ENCODE measurements at regions of chr7 and their contacts with region 1.

Region 1: GRCh38 chr7:128425850-128426249 is 16.1 kb upstream of the IMPDH1 start:
- DNase-seq: peak in 1 of 2 experiments; percentile 97
- H3K4me3 ChIP-seq: no peak overlapping the region
- H3K27ac ChIP-seq: no peak overlapping the region
- H3K4me1 ChIP-seq: peaks cover 0 to 3% (median 0%) of the 10 kb centered on the region in 4 experiments; a peak in 1 of 7 replicates
- H3K27me3 ChIP-seq: no peaks in the 10 kb centered on the region
- CTCF ChIP-seq: peak; percentile 92 to 95 (median 93)
- EP300 ChIP-seq: no peak
- POLR2A ChIP-seq: no peak
- RAD21 ChIP-seq: peak; percentile 86 to 88

Region 2: DNA sequence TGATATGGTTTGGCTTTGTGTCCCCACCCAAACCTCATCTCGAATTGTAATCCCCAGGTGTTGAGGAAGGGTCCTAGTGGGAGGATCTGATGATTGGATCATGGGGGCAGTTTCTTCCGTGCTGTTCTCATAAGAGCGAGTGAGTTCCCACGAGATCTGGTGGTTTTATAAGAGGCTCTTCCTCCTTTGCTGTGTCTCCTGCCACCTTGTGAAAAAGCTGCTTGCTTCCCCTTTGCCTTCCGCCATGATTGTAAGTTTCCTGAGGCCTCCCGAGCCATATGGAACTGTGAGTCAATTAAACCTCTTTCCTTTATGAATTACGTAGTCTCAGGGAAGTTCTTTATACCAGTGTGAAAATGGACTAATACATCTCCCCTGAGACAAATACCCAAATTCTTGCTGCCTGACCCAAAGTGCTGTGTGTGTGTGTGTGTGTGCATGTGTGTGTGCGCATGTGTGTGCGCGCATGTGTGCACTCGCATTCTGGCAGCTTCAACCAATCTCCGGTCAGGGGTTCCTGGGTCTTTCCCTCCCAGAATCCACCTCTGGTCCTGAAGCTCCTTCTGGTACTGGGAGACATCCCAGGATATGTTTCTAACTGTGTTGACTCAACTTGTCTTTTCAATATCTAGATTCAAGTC is 296.5 kb before region 1 on chr7:
- CTCF ChIA-PET with region 1: no interaction called
- POLR2A ChIA-PET with region 1: no interaction called
- DNase-seq: no peak
- H3K4me3 ChIP-seq: no peak overlapping the region
- H3K27ac ChIP-seq: no peak overlapping the region
- H3K4me1 ChIP-seq: no peaks in the 10 kb centered on the region
- H3K27me3 ChIP-seq: peaks cover 1 to 8% (median 5%) of the 10 kb centered on the region in 4 experiments
- CTCF ChIP-seq: no peak
- EP300 ChIP-seq: no peak
- POLR2A ChIP-seq: no peak
- RAD21 ChIP-seq: no peak

Region 3: GRCh38 chr7:128274246-128274883 is 151.5 kb before region 1 on chr7:
- CTCF ChIA-PET with region 1: no interaction called
- POLR2A ChIA-PET with region 1: no interaction called
- DNase-seq: no peak
- H3K4me3 ChIP-seq: no peak overlapping the region
- H3K27ac ChIP-seq: no peak overlapping the region
- H3K4me1 ChIP-seq: peaks cover 3 to 15% (median 8%) of the 10 kb centered on the region in 4 experiments; a peak in 6 of 7 replicates
- H3K27me3 ChIP-seq: peaks cover 0 to 4% (median 1%) of the 10 kb centered on the region in 4 experiments; a peak in 2 of 7 replicates
- CTCF ChIP-seq: no peak
- EP300 ChIP-seq: no peak
- POLR2A ChIP-seq: no peak
- RAD21 ChIP-seq: no peak

Region 4: DNA sequence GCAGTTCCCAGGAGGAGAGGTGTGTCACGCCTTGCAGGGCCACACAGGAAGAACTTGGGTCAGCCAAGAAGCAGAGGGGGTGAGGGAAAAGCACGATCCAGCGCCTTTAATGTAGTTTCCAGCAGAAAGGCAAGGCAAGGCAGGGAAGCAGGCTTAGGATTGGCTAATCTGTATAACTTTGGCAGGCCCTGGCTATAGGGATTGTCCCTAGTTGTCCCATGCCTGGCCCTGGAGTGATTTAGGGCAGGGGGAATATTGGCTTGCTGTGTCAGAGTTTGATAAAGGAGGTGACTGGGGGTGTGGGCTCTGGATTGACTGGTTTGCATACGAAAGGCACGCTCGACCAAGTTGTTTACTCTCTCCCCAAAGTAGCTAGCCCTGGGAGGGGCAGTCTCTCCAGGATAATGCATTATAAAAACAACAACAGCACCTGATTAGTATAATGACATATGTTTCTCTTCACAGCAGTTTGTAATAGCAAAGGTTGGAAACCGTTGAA is 126.7 kb before region 1 on chr7:
- CTCF ChIA-PET with region 1: no interaction called
- POLR2A ChIA-PET with region 1: no interaction called
- DNase-seq: peak; percentile 13 to 58
- H3K4me3 ChIP-seq: peak overlapping the region in 3 of 4 experiments; percentile 8 to 43 (median 23); a peak in 4 of 8 replicates
- H3K27ac ChIP-seq: peak overlapping the region; percentile 87
- H3K4me1 ChIP-seq: peaks cover 9 to 22% (median 16%) of the 10 kb centered on the region in 4 experiments
- H3K27me3 ChIP-seq: no peaks in the 10 kb centered on the region
- CTCF ChIP-seq: no peak
- EP300 ChIP-seq: no peak; a peak in 1 of 3 replicates
- POLR2A ChIP-seq: no peak
- RAD21 ChIP-seq: no peak

Region 5: GRCh38 chr7:128352153-128352537 is 73.7 kb before region 1 on chr7:
- CTCF ChIA-PET with region 1: interaction called, 71 read pairs
- POLR2A ChIA-PET with region 1: no interaction called
- DNase-seq: peak; percentile 56 to 90
- H3K4me3 ChIP-seq: 0 out of 8 replicates have a peak overlapping the region, but pooled peaks of 1 of the 4 experiments have one; percentile 18
- H3K27ac ChIP-seq: no peak overlapping the region
- H3K4me1 ChIP-seq: peaks cover 0 to 7% (median 5%) of the 10 kb centered on the region in 4 experiments; a peak in 6 of 7 replicates
- H3K27me3 ChIP-seq: peaks cover 34 to 71% (median 57%) of the 10 kb centered on the region in 4 experiments
- CTCF ChIP-seq: peak; percentile 88 to 97 (median 90)
- EP300 ChIP-seq: no peak
- POLR2A ChIP-seq: no peak
- RAD21 ChIP-seq: peak; percentile 66 to 78

Region 6: GRCh38 chr7:128409596-128410160 is 16.2 kb before region 1 on chr7 and contains the start of gene IMPDH1:
- CTCF ChIA-PET with region 1: interaction called, 348 read pairs
- POLR2A ChIA-PET with region 1: interaction called, 3 read pairs
- DNase-seq: peak in 1 of 2 experiments; percentile 97
- H3K4me3 ChIP-seq: peak within 1 kb of the TSS; percentile 52 to 78 (median 64)
- H3K27ac ChIP-seq: no peak within 1 kb of the TSS
- H3K4me1 ChIP-seq: peaks cover 0 to 30% (median 23%) of the 10 kb centered on the region in 4 experiments; a peak in 6 of 7 replicates
- H3K27me3 ChIP-seq: peaks cover 33 to 73% (median 53%) of the 10 kb centered on the region in 4 experiments
- CTCF ChIP-seq: no peak
- EP300 ChIP-seq: no peak
- POLR2A ChIP-seq: peak in 1 of 2 experiments; percentile 51; a peak in 1 of 3 replicates
- RAD21 ChIP-seq: no peak
- total RNA-seq, gene IMPDH1: 44.0 and 45.8 TPM in 2 replicates

Region 7: DNA sequence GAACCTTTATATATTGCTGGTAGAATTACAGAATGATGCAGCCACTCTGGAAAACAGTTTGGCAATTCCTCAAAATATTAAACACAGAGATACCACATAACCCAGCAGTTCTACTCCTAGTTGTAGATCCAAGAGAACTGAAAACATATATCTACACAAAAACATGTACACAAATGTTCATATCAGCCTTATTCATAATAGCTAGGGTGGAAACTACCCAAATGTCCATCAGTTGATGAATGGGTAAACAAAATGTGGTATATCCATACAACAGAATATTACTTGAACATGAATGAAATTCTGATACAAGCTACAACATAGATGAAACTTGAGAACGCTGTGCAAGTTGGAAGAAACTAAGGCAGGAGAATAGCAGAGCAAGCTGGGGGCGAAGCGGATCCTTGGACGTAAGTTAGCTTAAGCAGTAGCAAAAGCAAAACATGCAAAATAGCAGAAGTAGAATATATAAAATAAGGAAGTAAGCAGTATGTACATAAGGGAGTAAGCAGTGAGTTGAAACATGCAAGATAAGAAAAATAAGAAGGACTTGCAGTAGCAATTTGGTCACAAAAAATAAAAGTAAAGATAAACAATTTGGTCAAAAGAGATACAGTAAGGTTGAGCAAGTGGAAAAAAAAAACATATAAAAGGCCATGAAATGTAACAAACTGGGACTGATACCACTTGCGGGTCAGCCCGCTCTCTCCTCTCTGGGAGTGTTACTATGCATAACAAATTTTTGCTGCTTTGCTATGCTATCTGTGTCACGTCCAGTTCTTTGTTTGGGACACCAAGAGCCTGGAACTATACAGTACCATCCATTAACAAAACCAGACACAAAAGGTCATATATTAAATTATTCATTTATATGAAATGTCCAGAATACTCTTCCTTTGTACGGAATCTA is 11.8 kb after region 1 on chr7:
- CTCF ChIA-PET with region 1: interaction called, 258 read pairs
- POLR2A ChIA-PET with region 1: no interaction called
- DNase-seq: no peak
- H3K4me3 ChIP-seq: no peak overlapping the region
- H3K27ac ChIP-seq: no peak overlapping the region
- H3K4me1 ChIP-seq: peaks cover 2 to 5% (median 3%) of the 10 kb centered on the region in 4 experiments; a peak in 4 of 7 replicates
- H3K27me3 ChIP-seq: no peaks in the 10 kb centered on the region
- CTCF ChIP-seq: no peak
- EP300 ChIP-seq: no peak
- POLR2A ChIP-seq: no peak
- RAD21 ChIP-seq: no peak

Region 8: GRCh38 chr7:128462460-128462859 is 36.6 kb after region 1 on chr7:
- CTCF ChIA-PET with region 1: interaction called, 477 read pairs
- POLR2A ChIA-PET with region 1: interaction called, 15 read pairs
- DNase-seq: no peak
- H3K4me3 ChIP-seq: no peak overlapping the region
- H3K27ac ChIP-seq: no peak overlapping the region
- H3K4me1 ChIP-seq: peaks cover 0 to 5% (median 0%) of the 10 kb centered on the region in 4 experiments; a peak in 2 of 7 replicates
- H3K27me3 ChIP-seq: no peaks in the 10 kb centered on the region
- CTCF ChIP-seq: no peak
- EP300 ChIP-seq: no peak
- POLR2A ChIP-seq: no peak
- RAD21 ChIP-seq: no peak

Region 9: GRCh38 chr7:128697302-128697905 is 271.6 kb after region 1 on chr7:
- CTCF ChIA-PET with region 1: no interaction called
- POLR2A ChIA-PET with region 1: no interaction called
- DNase-seq: peak in 1 of 2 experiments; percentile 97
- H3K4me3 ChIP-seq: peak overlapping the region; percentile 32 to 74 (median 56)
- H3K27ac ChIP-seq: no peak overlapping the region
- H3K4me1 ChIP-seq: peaks cover 3 to 16% (median 5%) of the 10 kb centered on the region in 4 experiments
- H3K27me3 ChIP-seq: no peaks in the 10 kb centered on the region; a peak in 2 of 7 replicates
- CTCF ChIP-seq: peak; percentile 58 to 65 (median 62)
- EP300 ChIP-seq: no peak
- POLR2A ChIP-seq: peak in 1 of 2 experiments; percentile 69; a peak in 2 of 3 replicates
- RAD21 ChIP-seq: peak; percentile 23 to 31